WTC11 (cell line): ENCODE measurements at regions of chr15 and their contacts with region 1.

Region 1: DNA sequence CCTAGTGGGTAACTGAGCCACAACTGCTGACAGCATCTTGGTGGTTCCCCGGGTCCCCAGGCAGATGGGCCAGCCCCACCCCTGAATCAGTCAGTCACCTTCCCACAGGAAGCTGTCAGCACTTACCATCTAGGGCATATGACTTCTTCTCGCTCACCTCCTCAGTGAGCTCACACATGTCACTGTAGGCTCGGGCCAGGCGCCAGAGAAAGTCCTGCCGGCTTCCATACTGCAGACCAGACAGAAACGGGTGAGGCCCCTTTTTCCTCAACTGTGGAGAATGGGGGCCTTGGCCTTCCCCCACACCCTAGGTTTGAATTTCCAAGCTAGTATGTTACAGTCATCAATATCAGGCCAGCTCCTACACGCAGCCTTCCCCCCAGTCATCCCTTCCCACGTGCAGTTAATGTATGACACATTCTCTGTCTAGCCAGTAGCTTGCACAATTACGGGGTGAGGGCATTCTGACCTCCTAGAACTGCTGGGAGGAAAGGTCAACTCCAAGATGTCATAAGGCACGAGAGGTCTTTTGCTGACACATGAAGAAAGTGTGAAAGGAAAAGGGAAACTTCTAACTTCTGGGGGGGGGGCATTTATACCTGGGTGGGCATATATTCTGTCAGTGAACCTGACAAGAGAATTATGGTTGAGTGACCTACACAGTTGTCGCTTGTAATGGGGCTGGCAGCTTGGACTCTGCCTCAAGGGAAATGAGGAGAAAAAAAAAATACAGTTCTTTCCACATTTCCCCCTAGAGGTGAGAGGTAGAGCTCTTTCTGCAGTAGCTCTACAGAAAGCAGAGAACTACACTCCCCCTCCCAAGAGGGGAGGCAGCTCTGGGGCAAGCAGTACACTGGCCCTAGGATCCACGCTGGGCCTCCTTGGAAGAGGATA is 10.9 kb downstream of the RMDN3 start:
- DNase-seq: no peak
- ATAC-seq: peak; percentile 56
- H3K4me3 Mint-ChIP-seq: no peak overlapping the region
- H3K27ac Mint-ChIP-seq: no peak overlapping the region
- H3K4me1 Mint-ChIP-seq: peaks cover 19% of the 10 kb centered on the region
- H3K27me3 Mint-ChIP-seq: no peaks in the 10 kb centered on the region
- CTCF ChIP-seq: no peak

Region 2: DNA sequence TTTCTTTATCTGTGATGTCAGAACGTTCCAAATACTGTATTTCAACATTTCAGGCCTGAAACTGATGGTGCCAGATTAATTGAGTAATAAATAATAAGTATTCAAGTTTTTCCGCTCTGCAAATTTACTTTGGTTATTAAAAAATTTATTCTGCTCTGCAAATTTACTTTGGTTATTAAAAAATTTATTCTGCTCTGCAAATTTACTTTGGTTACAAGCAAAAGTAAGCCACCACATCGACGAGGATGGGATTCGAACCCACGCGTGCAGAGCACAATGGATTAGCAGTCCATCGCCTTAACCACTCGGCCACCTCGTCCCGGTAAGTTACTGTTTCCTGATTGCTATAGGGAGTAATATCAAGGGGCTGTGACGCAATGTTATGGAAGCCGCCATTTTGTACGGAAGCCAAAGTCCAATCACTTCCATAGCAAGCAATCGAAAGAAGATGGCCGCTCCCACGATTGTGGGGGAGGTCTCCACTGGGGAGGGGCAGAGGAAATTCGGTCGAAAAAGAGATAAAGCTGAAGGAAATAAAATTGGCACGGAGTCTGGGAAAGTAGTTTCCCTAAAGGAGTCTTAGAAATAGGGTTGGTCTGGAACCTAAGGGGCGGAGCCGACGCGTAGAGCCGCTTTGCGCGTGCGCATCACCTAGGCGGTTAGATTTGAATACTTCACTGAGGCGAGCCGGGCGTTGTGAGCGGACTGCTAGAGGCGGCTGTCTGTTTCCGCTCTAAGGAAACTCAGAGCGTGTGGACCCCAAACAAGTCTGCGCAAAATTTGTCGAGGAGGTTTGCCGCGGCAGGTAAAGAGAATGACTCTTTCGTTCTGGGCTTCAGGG is 150.4 kb before region 1 on chr15 and contains the start of gene KNL1:
- CTCF ChIA-PET with region 1: interaction called, 14 read pairs
- POLR2A ChIA-PET with region 1: interaction called, 9 read pairs
- DNase-seq: peak; percentile 92
- ATAC-seq: peak; percentile 78
- H3K4me3 Mint-ChIP-seq: peak within 1 kb of the TSS; percentile 92
- H3K27ac Mint-ChIP-seq: peak within 1 kb of the TSS; percentile 100
- H3K4me1 Mint-ChIP-seq: peaks cover 27% of the 10 kb centered on the region
- H3K27me3 Mint-ChIP-seq: no peaks in the 10 kb centered on the region; the same call in 1 of the 2 replicates
- CTCF ChIP-seq: no peak
- total RNA-seq, gene KNL1: 18.4 to 24.0 TPM (median 21.1 TPM) in 3 replicates

Region 3: GRCh38 chr15:40660686-40661085 is 83.5 kb before region 1 on chr15:
- CTCF ChIA-PET with region 1: no interaction called
- POLR2A ChIA-PET with region 1: no interaction called
- DNase-seq: no peak
- ATAC-seq: no peak
- H3K4me3 Mint-ChIP-seq: no peak overlapping the region
- H3K27ac Mint-ChIP-seq: 0 out of 2 replicates have a peak overlapping the region, but pooled peaks have one; percentile 53
- H3K4me1 Mint-ChIP-seq: no peaks in the 10 kb centered on the region
- H3K27me3 Mint-ChIP-seq: no peaks in the 10 kb centered on the region
- CTCF ChIP-seq: no peak

Region 4: DNA sequence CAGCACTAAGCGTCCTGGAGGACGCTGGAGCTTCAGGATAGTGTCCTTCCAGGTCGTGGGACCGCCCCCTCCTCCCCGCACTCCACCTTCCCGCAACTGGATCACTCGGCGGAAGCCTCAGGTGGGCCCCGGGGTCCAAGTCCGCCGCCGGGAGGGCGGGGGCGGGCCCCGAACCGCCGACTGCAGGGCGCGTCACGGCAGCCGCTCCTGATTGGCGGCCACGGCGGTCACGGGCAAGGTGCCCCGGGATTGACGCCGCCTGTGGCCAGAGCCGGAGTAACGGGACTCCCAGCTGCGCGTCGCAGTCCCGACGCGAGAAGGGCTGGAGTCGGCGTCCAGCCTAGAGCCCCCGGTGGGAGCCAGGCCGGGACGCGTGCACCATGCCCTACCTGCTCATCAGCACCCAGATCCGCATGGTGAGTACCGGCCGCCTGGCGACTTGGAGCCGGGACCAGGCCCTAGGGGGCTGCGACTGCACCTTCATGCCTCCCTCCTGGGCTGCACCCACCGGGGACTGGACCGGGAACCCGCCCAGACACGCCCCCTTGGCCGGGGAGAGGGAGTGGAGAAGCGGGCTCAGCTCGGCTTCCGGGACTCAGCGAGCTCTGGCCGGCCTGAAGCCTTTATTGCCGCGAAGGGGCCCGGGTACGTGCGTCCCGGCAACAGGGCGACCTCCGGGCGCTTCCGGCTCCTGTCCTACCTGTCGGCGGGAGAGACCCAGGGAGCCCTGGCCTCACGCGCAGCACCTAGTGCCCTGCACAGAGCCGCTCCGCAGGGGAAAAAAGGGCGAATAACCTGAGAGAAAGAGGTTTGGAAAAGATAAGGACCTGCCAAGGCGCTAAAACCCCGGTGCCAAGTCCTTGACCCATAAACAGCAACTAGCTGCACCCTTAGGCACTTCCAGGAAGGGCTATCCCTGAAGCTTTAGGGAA is 19.9 kb after region 1 on chr15 and contains the start of gene GCHFR:
- CTCF ChIA-PET with region 1: interaction called, 23 read pairs
- POLR2A ChIA-PET with region 1: interaction called, 4 read pairs
- DNase-seq: peak; percentile 81
- ATAC-seq: peak; percentile 40
- H3K4me3 Mint-ChIP-seq: peak within 1 kb of the TSS; percentile 81
- H3K27ac Mint-ChIP-seq: peak within 1 kb of the TSS; percentile 94
- H3K4me1 Mint-ChIP-seq: peaks cover 31% of the 10 kb centered on the region
- H3K27me3 Mint-ChIP-seq: peaks cover 14% of the 10 kb centered on the region
- CTCF ChIP-seq: no peak
- total RNA-seq, gene GCHFR: 42.3 to 63.8 TPM (median 62.9 TPM) in 3 replicates

Region 5: GRCh38 chr15:40782580-40783227 is 38.5 kb after region 1 on chr15:
- CTCF ChIA-PET with region 1: interaction called, 21 read pairs
- POLR2A ChIA-PET with region 1: interaction called, 3 read pairs
- DNase-seq: peak; percentile 75
- ATAC-seq: peak; percentile 74
- H3K4me3 Mint-ChIP-seq: no peak overlapping the region
- H3K27ac Mint-ChIP-seq: peak overlapping the region; percentile 54
- H3K4me1 Mint-ChIP-seq: peaks cover 37% of the 10 kb centered on the region
- H3K27me3 Mint-ChIP-seq: no peaks in the 10 kb centered on the region
- CTCF ChIP-seq: no peak

Region 6: DNA sequence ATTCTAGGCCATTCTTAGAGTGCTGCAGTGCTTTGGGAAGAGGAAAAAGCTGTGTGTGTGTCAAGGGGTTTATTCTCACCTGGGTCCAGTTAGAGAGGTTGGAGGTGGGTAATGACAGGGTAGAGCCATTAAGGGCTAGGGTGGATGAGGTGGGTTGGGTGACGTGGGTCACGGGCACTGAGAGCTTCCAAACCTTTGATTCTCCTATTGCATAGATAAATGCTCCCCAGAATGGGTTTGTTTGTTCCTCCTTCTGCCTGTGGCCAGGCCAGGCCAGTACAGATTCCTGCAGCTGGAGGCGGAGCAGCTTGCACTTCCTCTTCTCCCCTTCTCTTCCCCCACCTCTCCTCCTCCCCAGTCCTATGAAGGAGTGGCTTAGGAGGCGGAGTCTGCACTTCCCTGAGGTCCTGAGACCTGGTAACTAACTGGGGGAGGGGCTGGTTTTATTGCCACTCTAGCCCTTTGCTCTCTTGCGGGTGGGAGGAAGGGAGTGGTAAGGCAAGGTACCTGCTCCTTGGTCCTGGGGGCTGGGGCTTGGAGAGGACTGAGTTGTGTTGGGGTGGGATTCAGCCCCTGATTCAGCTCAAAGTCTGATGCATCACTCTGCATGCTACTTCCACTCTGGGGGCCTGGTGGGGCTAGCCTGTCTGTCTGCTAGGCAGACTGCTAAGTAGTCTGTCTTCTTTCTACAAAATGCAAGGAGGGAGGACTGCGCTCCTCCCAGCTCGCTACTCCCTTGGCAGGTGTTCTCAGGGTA is 103.2 kb after region 1 on chr15:
- CTCF ChIA-PET with region 1: interaction called, 12 read pairs
- POLR2A ChIA-PET with region 1: interaction called, 3 read pairs
- DNase-seq: no peak
- ATAC-seq: peak; percentile 27
- H3K4me3 Mint-ChIP-seq: peak overlapping the region; percentile 93
- H3K27ac Mint-ChIP-seq: peak overlapping the region; percentile 57
- H3K4me1 Mint-ChIP-seq: peaks cover 41% of the 10 kb centered on the region
- H3K27me3 Mint-ChIP-seq: no peaks in the 10 kb centered on the region
- CTCF ChIP-seq: no peak

Region 7: DNA sequence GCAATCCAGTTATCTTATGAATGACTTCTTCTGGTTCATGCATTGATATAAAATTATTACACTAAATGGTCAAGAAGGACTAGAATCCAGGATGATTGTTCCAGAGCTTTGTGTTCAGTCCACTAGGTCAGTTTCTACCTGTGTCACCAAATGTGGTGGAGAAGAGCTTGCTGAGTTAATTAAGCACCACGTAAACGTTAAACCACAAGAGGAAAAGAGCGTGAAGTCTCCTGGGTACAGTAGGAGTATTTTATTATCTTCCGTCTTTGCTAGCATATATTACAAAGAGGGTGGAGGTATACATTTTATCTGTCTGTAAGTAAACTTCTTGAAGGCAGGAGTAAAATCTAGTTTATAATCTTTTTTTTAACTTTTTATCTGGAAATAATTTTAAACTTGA is 510.4 kb after region 1 on chr15:
- CTCF ChIA-PET with region 1: no interaction called
- POLR2A ChIA-PET with region 1: no interaction called
- DNase-seq: no peak
- ATAC-seq: no peak
- H3K4me3 Mint-ChIP-seq: no peak overlapping the region
- H3K27ac Mint-ChIP-seq: no peak overlapping the region
- H3K4me1 Mint-ChIP-seq: 0 out of 2 replicates have a peak, but pooled peaks cover 2% of the 10 kb centered on the region
- H3K27me3 Mint-ChIP-seq: no peaks in the 10 kb centered on the region
- CTCF ChIP-seq: no peak